ENCODE measurements at regions of chr3 and their contacts with region 1.

Region 1: DNA sequence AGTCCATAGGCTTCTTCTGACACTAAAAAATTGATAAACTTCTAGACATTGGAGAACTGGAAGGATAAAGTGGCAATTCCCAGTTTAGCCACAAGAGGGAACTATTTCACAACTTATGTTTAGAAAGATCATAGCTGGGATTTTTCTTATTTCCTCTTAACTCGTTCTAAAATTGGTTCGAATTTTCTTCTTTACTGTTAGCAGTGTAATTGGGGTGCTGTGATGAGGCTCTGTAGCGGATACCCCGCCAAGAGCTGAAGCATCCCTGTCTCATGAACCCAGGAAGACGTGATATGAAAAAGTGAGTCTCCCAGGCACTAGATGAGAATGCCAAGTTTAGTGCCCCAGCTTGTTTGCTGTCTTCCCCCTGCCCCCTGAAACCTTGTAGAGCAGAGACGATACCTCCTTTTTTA is 85.1 kb downstream of the PDCD6IP start:
- DNase-seq: no peak

Region 2: DNA sequence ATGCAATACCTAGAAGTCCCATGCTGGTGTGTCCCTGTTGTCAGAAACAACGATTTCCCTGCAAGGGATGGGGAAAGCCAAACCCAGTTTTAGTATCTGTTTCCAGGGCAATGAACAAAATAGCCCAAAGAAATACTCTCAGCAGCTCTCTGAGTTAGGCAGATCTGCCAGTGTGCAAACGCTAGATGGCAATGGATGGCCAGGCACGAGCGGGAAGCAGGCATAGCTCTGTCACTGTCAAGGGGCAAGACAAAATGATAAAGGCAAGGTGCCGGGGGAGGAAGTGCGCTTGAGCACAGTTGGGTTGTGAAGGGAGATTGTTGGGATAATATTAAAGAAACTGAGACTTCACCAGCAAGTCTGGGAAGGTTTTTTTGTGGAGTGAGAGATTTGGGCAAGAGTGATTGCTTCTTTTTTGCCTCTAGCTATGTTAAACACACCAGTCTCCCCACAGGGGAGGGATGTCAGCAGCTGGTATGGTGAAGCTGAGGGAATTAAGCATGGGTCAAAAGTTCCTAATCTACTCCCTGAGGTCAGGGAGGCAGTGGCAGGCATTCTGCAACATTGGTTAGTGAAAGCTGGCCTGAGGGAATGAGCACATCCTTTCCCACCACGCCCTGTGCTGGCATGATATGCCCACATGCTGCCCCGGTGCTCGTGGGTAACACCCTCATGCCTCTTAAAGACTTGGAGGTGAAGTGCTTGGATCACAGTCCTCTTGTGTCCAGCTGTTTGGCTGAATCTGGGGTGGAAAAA is 32.4 kb after region 1 on chr3:
- CTCF ChIA-PET with region 1: interaction called, 11 read pairs
- POLR2A ChIA-PET with region 1: no interaction called
- DNase-seq: no peak

Region 3: DNA sequence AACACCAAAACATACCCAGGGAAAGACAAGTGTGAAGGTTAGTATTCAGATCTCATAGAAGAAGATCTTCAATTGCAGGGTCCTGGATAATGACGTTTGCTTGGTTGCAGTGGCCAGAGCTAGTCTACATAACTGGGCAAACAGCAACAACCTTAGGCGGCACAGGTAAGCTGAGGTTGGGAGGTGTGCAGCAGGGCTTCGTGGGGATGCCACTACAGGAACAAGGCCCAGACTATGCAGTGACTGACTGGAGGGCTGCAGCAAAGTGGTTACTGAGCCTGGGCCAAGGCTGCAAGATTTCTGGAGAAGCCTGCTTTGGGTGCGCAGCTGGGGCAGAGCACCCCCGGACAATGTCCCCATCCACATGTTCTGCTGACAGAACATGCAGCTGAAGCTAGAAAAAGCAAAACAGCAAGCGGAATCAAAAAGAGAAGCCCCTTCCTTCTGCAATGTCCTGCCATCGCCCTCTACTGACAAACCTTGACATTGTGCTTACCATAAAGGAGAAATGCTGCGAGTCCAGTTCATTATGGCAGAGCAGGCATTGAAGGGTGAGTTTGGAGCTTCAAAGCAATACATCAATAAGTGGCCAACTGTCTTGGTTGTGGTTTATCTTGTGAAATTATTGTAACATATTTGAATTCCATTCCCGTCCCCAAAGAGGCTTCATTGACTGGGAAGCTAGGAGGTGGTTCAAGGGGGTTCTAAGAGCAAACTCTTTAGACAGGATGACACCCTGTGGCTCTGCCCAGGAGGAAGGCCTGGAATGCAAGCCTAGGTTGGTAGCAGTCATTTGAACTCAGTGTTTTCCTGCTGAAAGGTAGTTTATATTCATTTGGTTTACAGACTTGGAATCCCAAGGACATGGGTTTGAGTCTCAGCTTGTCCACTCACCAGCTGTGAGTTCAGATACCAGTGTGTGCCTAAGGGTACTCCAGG is 131.9 kb after region 1 on chr3:
- CTCF ChIA-PET with region 1: interaction called, 22 read pairs
- POLR2A ChIA-PET with region 1: no interaction called
- DNase-seq: peak; percentile 30

Region 4: DNA sequence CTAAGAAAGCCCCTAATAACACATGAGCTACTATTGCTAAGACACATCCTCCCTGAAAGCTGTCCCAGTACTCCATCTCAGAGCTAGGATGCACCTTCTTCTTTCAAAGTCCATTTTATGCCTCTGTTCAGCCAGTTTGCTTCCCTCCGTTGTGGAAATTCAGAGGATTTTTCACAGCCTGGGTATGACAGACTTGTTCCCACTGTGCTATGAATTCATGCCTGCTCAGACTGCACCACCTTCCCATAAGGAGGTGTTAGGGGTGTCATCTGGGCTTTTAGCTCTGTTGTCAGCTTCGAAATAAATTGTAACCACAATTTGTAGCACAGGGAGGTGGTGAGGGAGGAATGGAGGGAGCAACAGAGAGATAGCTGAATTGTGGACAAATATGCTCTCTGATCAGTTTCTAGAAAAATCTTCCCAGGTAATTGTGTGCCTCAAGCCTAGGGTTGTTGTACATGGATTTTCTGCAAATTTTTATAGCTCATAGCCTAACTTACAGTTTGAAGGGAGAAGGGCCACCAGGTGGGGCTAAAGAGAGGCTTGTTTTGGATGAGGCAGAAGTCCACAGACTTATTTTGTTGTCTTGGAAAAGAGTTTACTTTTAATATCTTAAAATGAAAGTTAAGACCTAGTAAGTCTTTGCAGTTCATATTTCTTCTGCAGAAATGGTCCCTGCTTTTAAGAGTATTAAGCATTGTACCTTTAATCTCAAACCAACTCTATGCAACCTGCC is 376.9 kb after region 1 on chr3:
- CTCF ChIA-PET with region 1: interaction called, 13 read pairs
- POLR2A ChIA-PET with region 1: no interaction called
- DNase-seq: peak; percentile 45

Region 5: DNA sequence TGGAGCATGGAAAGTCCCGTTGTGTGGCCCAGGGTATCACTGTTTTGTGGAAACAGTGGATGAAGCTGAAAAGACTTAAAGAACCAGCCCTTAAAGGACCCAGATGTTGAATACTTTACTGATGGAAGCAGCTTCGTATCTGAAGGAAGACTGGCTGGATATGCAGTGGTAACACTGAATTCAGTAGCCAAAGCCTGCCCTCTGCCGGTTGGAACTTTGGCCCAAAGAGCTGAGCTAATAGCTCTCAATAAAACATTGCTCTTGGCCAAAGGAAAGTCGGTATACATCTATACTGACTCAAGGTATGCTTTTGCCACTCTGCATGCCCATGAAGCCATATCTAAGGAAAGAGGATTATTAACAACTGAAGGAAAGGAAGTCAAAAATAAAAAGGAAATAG is 800.3 kb after region 1 on chr3:
- CTCF ChIA-PET with region 1: interaction called, 53 read pairs
- POLR2A ChIA-PET with region 1: no interaction called
- DNase-seq: peak; percentile 12